ENCODE measurements at regions of chr13 and their contacts with region 1.

Region 1: DNA sequence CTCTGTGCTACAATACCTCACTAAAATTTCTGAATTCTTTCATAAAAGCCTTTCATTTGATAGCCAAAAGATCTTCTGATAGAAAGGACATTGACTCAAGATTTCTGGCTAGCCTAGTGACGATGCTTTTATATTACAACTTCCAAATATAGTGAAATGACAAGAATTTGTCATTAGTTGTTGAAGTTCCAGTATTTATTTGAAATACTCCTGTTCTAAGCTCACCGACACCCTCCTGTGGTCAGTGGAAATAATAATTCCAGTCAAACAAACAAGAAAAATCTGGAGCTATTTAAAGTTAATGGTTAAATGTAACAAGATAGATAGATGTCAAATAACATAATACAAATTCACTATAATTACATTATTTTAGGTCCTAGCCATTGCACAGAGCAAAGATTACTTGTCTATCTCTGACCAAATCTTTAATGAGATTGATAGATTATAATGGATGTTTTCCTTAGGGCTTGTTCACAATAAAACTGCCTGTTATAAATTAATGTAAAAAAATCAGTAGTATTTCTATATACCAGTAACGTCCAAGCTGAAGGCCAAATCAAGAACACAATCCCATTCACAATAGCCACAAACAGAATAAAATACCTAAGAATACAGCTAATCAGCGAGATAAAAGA is 195.5 kb downstream of the RGCC start:
- DNase-seq: no peak
- H3K4me3 ChIP-seq: no peak overlapping the region
- CTCF ChIP-seq: peak; percentile 12

Region 2: DNA sequence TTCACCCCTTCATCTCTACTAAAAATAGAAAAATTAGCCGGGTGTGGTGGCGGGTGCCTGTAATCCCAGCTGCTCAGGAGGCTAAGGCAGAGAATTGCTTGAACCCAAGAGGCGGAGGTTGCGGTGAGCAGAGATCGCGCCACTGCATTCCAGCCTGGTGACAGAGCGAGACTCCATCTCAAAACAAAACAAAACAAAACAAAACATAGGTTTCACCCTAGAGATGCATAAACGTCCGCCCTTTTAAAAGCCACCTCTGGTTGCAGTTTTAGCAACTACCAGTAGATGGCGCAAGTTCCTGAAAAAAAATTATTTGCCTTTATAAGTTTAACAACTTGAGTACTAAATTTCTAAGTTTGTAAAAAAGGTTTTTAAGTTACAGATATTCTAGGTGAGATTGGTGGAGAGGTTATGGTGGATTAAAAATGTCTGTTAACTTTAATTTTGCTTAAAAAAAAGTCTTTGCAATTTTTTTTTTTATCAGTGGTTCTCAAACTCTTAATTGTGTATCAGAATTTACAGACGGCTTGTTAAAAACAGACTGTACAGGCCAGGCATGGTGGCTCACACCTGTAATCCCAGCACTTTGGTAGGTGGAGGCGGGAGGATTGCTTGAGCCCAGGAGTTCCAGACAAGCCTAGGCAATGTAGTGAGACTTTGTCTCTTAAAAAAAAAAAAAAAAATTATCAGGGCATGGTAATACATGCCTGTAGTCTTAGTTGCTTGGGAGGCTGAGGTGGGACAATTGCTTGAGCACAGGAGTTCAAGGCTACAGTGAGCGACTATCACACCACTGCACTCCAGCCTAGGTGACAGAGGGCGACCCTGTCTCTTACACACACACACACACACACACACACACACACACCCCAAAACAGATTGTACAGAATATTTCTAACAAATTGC is 299.7 kb before region 1 on chr13:
- CTCF ChIA-PET with region 1: interaction called, 15 read pairs
- POLR2A ChIA-PET with region 1: no interaction called
- DNase-seq: no peak
- H3K4me3 ChIP-seq: no peak overlapping the region
- CTCF ChIP-seq: peak; percentile 56

Region 3: GRCh38 chr13:41384755-41385503 is 267.9 kb before region 1 on chr13:
- CTCF ChIA-PET with region 1: interaction called, 55 read pairs
- POLR2A ChIA-PET with region 1: no interaction called
- DNase-seq: no peak
- H3K4me3 ChIP-seq: no peak overlapping the region
- CTCF ChIP-seq: peak; percentile 21

Region 4: GRCh38 chr13:41411522-41411921 is 241.3 kb before region 1 on chr13:
- CTCF ChIA-PET with region 1: interaction called, 237 read pairs
- POLR2A ChIA-PET with region 1: no interaction called
- DNase-seq: peak; percentile 10
- H3K4me3 ChIP-seq: no peak overlapping the region
- CTCF ChIP-seq: peak; percentile 37

Region 5: GRCh38 chr13:41458761-41459431 is 193.9 kb before region 1 on chr13:
- CTCF ChIA-PET with region 1: interaction called, 11 read pairs
- POLR2A ChIA-PET with region 1: interaction called, 4 read pairs
- DNase-seq: no peak
- H3K4me3 ChIP-seq: no peak overlapping the region; the same call in 1 of the 2 replicates
- CTCF ChIP-seq: peak; percentile 51

Region 6: GRCh38 chr13:41622432-41623429 is 30.1 kb before region 1 on chr13:
- CTCF ChIA-PET with region 1: interaction called, 10 read pairs
- POLR2A ChIA-PET with region 1: no interaction called
- DNase-seq: no peak
- H3K4me3 ChIP-seq: no peak overlapping the region
- CTCF ChIP-seq: no peak

Region 7: GRCh38 chr13:43331672-43332071 is 1678.8 kb after region 1 on chr13:
- CTCF ChIA-PET with region 1: no interaction called
- POLR2A ChIA-PET with region 1: no interaction called
- DNase-seq: no peak
- H3K4me3 ChIP-seq: no peak overlapping the region
- CTCF ChIP-seq: no peak